CD8-positive, alpha-beta T cell (primary cell): ENCODE measurements at regions of chr2 and their contacts with region 1.

Region 1: GRCh38 chr2:101277113-101277512 is 24.4 kb downstream of the CNOT11 start:
- DNase-seq: no peak
- ATAC-seq: no peak
- H3K4me3 ChIP-seq: no peak overlapping the region
- H3K4me3 Mint-ChIP-seq: no peak overlapping the region
- H3K27ac ChIP-seq: no peak overlapping the region
- H3K27ac Mint-ChIP-seq: no peak overlapping the region
- H3K4me1 ChIP-seq: no peaks in the 10 kb centered on the region
- H3K4me1 Mint-ChIP-seq: peaks cover 32% of the 10 kb centered on the region
- H3K27me3 ChIP-seq: no peaks in the 10 kb centered on the region
- H3K27me3 Mint-ChIP-seq: no peaks in the 10 kb centered on the region
- CTCF ChIP-seq: no peak

Region 2: DNA sequence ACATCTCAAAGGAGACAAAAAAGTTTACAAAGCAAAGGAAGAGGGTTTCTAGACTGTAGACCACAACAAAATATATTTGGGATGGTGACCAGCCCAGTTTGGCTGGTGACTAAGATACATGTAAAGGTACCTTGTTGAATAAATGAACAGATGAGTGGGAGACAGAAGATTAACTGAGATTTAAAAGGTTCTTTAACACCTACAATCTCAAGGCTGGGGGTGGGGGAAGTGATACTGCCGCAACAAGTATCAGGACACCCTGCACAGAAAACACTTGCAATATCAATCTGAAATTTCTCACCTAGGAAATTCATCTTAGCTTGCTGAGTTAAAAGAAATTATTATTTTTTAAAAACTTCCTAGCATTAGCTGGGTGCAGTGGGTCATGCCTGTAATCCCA is 23.1 kb after region 1 on chr2:
- CTCF ChIA-PET with region 1: no interaction called
- POLR2A ChIA-PET with region 1: no interaction called
- intact Hi-C with region 1: loop called in 1 of 2 experiments (anchors 2 kb)
- DNase-seq: no peak
- ATAC-seq: no peak
- H3K4me3 ChIP-seq: no peak overlapping the region
- H3K4me3 Mint-ChIP-seq: peak overlapping the region; percentile 56
- H3K27ac ChIP-seq: peak overlapping the region in 1 of 2 experiments; percentile 43
- H3K27ac Mint-ChIP-seq: peak overlapping the region; percentile 80
- H3K4me1 ChIP-seq: peaks cover 72% of the 10 kb centered on the region
- H3K4me1 Mint-ChIP-seq: peaks cover 95% of the 10 kb centered on the region
- H3K27me3 ChIP-seq: no peaks in the 10 kb centered on the region
- H3K27me3 Mint-ChIP-seq: no peaks in the 10 kb centered on the region
- CTCF ChIP-seq: no peak

Region 3: DNA sequence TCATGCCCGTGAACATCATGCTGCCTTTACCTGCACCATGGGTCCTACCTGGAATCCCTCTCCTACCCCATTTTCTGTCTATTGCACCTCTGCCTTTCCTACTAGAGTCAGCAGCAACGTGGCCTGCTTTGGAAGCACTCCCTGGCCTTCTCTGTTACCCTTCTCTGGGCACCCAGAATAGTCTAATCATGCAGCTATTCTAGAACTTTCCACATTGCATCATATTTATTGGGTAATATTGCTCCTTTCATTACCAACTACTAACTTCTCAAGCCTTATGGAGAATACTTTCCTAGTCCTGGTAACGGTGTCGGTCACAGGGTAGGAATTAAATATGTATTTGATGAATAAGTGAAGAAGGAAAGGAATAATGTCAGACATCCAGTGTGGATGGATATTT is 143.5 kb after region 1 on chr2:
- CTCF ChIA-PET with region 1: no interaction called
- POLR2A ChIA-PET with region 1: no interaction called
- intact Hi-C with region 1: no loop called
- DNase-seq: no peak
- ATAC-seq: no peak
- H3K4me3 ChIP-seq: no peak overlapping the region
- H3K4me3 Mint-ChIP-seq: no peak overlapping the region
- H3K27ac ChIP-seq: no peak overlapping the region
- H3K27ac Mint-ChIP-seq: no peak overlapping the region
- H3K4me1 ChIP-seq: no peaks in the 10 kb centered on the region
- H3K4me1 Mint-ChIP-seq: no peaks in the 10 kb centered on the region
- H3K27me3 ChIP-seq: no peaks in the 10 kb centered on the region
- H3K27me3 Mint-ChIP-seq: no peaks in the 10 kb centered on the region
- CTCF ChIP-seq: no peak